ENCODE measurements at regions of chr1 and their contacts with region 1.

Region 1: DNA sequence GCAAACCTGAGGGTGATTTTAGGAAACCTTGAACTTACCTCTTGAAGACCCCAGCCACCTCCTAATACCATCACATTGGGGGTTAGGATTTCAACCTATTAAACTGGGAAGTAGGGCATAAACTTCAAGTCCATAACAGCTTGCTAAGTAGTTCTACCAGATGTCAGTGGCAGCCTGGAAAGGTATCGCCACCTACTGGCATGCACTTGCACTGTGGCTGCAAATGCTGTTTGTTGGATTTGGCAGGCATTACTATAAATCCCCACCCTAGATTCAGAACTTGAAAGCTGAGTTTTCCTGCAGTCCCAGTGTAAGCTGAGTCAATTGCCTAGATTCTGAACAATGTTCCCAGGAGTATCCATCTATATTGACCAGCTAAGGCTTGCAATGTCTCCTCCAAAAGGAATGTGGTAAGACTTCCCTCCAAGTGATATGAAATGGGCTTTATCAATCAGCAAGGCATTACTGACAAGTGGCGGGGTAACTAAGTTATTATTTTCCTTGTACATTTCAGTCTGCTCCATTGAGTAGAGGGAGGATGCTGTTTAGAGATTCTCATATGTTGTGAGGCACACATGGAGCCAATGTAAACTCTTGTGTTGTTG is 474.5 kb downstream of the PTPRC start:
- DNase-seq: peak; percentile 26 to 64 (median 44)
- ATAC-seq: peak; percentile 80
- H3K4me3 ChIP-seq: no peak overlapping the region
- H3K4me3 Mint-ChIP-seq: peak overlapping the region in 1 of 10 donors; percentile 7
- H3K27ac ChIP-seq: no peak overlapping the region
- H3K27ac Mint-ChIP-seq: peak overlapping the region in 1 of 9 donors; percentile 4
- H3K4me1 ChIP-seq: no peaks in the 10 kb centered on the region
- H3K4me1 Mint-ChIP-seq: peaks cover 0 to 22% (median 0%) of the 10 kb centered on the region in 7 donors
- H3K27me3 ChIP-seq: no peaks in the 10 kb centered on the region
- H3K27me3 Mint-ChIP-seq: no peaks in the 10 kb centered on the region

Region 2: GRCh38 chr1:198837278-198838021 is 275.9 kb before region 1 on chr1:
- CTCF ChIA-PET with region 1: no interaction called
- POLR2A ChIA-PET with region 1: no interaction called
- intact Hi-C with region 1: loop called in 1 of 2 experiments (anchors 5 kb)
- DNase-seq: no peak
- ATAC-seq: no peak
- H3K4me3 ChIP-seq: no peak overlapping the region
- H3K4me3 Mint-ChIP-seq: no peak overlapping the region
- H3K27ac ChIP-seq: no peak overlapping the region
- H3K27ac Mint-ChIP-seq: peak overlapping the region in 1 of 9 donors; percentile 13
- H3K4me1 ChIP-seq: no peaks in the 10 kb centered on the region
- H3K4me1 Mint-ChIP-seq: peaks cover 0 to 5% (median 0%) of the 10 kb centered on the region in 7 donors
- H3K27me3 ChIP-seq: no peaks in the 10 kb centered on the region
- H3K27me3 Mint-ChIP-seq: no peaks in the 10 kb centered on the region

Region 3: DNA sequence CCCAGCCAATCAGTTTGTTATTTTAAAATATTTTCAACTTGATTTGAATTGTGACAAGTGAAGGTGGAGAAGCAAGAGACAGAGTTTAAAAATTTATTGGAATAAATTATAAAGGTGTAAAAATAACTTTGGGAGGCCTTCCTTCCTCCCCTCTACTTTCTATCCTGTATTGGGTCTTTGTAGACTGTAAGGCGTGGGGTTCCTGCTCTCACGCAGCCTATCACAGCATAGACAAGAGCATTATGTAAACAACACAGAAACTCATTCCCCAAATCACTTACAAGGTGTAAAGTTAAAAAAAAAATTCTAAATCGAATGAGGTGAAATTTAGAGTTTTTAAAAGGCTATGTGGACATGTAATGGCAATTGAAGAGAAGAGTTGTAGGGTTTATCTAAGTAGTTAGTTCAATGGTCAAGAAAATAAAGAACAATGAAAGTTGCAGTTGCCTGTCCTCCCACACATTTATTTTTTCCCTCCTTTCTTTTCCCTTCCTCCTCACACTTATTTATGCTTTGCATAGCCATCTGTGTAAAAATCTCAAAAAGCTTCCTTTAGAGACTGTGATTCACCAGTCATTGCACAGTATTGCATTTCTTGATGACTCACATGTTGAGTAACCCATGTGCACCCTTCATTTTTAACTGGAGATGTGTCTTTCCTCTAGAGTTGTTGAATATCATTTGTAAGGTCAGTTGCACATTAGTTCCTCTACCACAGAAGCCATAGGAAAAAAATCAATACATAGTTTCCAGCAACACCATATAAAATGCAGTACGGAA is 232.4 kb before region 1 on chr1:
- CTCF ChIA-PET with region 1: interaction called, 4 read pairs
- POLR2A ChIA-PET with region 1: no interaction called
- intact Hi-C with region 1: loop called (anchors 1 to 5 kb)
- DNase-seq: no peak
- ATAC-seq: peak; percentile 73
- H3K4me3 ChIP-seq: no peak overlapping the region
- H3K4me3 Mint-ChIP-seq: peak overlapping the region in 1 of 10 donors; percentile 16
- H3K27ac ChIP-seq: no peak overlapping the region
- H3K27ac Mint-ChIP-seq: peak overlapping the region in 1 of 9 donors; percentile 25
- H3K4me1 ChIP-seq: no peaks in the 10 kb centered on the region
- H3K4me1 Mint-ChIP-seq: peaks cover 0 to 45% (median 9%) of the 10 kb centered on the region in 7 donors
- H3K27me3 ChIP-seq: no peaks in the 10 kb centered on the region
- H3K27me3 Mint-ChIP-seq: no peaks in the 10 kb centered on the region

Region 4: DNA sequence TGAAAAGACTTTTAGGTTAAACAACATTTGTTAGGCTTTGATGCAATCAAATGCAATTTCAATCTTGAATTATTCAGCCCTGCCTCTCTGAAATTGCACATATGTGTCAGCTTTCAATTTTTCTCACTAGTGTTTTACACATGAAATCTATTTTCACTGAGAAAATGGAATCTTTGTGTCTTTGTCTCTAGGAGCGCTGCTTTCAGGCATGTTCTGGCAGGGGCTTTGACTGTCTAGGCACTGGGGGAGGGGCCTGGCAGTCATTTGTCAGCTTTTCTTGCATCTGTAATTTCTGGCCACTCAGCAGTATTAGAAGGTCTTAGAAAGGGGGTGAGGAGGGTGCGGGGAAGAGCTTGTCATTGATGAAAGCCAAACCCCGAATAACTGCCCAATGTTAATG is 210.2 kb before region 1 on chr1:
- CTCF ChIA-PET with region 1: no interaction called
- POLR2A ChIA-PET with region 1: no interaction called
- intact Hi-C with region 1: loop called (anchors 2 to 5 kb)
- DNase-seq: no peak
- ATAC-seq: no peak
- H3K4me3 ChIP-seq: no peak overlapping the region
- H3K4me3 Mint-ChIP-seq: no peak overlapping the region
- H3K27ac ChIP-seq: no peak overlapping the region
- H3K27ac Mint-ChIP-seq: peak overlapping the region in 1 of 9 donors; percentile 12
- H3K4me1 ChIP-seq: peaks cover 0 to 12% of the 10 kb centered on the region in 2 donors
- H3K4me1 Mint-ChIP-seq: peaks cover 9 to 59% (median 24%) of the 10 kb centered on the region in 7 donors
- H3K27me3 ChIP-seq: no peaks in the 10 kb centered on the region
- H3K27me3 Mint-ChIP-seq: no peaks in the 10 kb centered on the region

Measured in naive thymus-derived CD4-positive, alpha-beta T cell (primary cell).